ENCODE measurements at regions of chr10 and their contacts with region 1.

Region 1: DNA sequence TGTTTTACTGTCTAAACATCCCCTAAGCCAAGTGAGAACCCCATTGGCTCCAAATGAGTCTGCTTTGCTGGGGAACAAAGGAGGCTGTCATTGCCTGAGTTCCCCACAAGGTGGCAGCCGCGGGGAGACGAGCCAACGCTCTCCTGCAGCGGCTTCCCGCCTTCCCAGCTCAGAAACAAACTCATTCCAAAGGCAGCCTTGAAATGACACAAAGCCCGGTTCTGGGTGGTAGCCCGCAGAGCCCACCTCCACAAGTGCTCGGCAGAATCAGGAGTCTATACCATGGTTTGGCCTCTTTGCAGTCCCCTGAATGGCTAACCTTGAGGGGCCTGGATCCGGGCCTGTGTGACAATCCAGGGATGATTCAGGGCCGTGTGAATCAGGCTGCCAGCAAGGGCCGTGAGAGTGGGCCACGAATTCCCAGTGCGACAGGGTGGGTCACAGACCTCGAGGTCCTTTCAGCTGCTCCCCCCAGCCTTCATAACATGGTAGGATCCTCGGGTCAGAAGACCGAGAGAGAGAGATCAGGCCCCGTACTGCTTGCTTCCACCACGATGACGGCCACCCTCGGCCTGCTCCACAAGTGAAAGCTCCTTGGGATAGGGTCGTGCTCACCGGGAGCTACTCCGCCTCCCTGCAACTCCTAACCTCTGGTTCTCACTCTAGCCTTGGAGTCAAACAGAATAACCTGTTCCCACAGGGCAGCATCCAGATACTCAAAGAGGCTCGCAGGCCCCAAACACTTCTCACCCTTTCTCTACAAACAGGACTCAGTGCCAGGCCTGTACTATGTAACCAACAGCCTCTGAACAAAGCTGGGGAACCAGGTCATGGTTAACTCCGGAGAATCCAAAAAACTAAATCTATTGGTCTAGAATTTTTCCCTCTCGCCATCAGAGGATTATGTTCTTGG is 79.6 kb downstream of the DLG5 start:
- DNase-seq: peak; percentile 86
- H3K4me3 ChIP-seq: no peak overlapping the region
- H3K27ac ChIP-seq: peak overlapping the region; percentile 36 to 64
- H3K4me1 ChIP-seq: peaks cover 8% of the 10 kb centered on the region
- H3K27me3 ChIP-seq: no peaks in the 10 kb centered on the region
- CTCF ChIP-seq: peak; percentile 88 to 96 (median 94)
- POLR2A ChIP-seq: no peak

Region 2: GRCh38 chr10:78029269-78030226 is 182.6 kb after region 1 on chr10 and contains the start of gene POLR3A:
- intact Hi-C with region 1: loop called (anchors 10 kb)
- DNase-seq: peak; percentile 96
- H3K4me3 ChIP-seq: peak within 1 kb of the TSS; percentile 87 to 96
- H3K27ac ChIP-seq: peak within 1 kb of the TSS; percentile 60 to 71
- H3K4me1 ChIP-seq: peaks cover 9% of the 10 kb centered on the region
- H3K27me3 ChIP-seq: no peaks in the 10 kb centered on the region
- CTCF ChIP-seq: peak; percentile 86 to 89 (median 88)
- POLR2A ChIP-seq: no peak
- total RNA-seq, gene POLR3A: 20.9 to 23.0 TPM

Region 3: GRCh38 chr10:78053211-78053868 is 206.4 kb after region 1 on chr10:
- intact Hi-C with region 1: no loop called
- DNase-seq: no peak
- H3K4me3 ChIP-seq: no peak overlapping the region
- H3K27ac ChIP-seq: no peak overlapping the region
- H3K4me1 ChIP-seq: no peaks in the 10 kb centered on the region
- H3K27me3 ChIP-seq: no peaks in the 10 kb centered on the region
- CTCF ChIP-seq: no peak
- POLR2A ChIP-seq: no peak